ENCODE measurements at regions of chr14 and their contacts with region 1.

Region 1: DNA sequence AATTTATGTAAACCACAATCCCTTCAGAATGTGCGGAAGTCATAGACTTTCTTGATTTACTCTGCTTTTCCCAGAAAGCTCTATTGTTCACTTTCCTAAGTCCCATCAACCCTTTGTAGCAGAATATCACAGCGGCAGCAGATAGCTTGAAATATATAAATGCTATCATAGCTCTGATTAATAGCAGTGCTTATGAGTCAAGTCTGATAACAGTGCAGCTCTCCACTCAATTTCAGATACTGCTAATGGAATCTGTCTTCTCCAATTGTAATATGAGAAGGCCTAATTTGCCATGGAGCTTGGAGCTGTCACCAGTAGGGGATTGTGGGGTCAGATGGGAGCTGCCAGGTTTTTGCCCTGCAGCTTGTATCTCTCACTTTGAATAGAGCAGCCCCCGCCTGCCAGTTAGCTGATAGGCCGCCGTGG is 10.9 kb downstream of the TMEM260 start:
- DNase-seq: no peak
- H3K4me3 ChIP-seq: no peak overlapping the region
- H3K27me3 ChIP-seq: no peaks in the 10 kb centered on the region
- CTCF ChIP-seq: no peak

Region 2: DNA sequence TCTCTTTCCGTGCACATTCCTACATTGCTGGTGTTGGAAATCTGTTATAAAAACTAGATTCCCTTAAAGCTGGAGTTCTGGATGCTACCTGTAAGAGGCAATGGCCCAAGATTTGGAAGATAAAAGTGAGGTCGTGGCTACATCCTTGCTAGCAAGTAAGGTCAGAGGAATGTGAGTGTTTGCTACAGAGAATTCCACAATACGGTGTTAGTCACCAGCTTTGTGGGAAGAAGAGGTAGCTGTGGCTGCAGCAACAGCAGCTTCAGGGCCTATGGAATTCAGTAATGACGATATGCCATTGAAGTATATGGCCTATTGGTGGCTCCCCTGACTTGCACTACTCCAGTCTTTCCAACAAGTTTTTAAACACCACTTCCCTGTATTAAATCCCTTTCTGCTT is 238.7 kb before region 1 on chr14:
- CTCF ChIA-PET with region 1: no interaction called
- POLR2A ChIA-PET with region 1: no interaction called
- DNase-seq: peak; percentile 16
- H3K4me3 ChIP-seq: no peak overlapping the region
- H3K27me3 ChIP-seq: no peaks in the 10 kb centered on the region
- CTCF ChIP-seq: no peak

Region 3: GRCh38 chr14:56579345-56580220 is 11.0 kb before region 1 on chr14 and contains the start of gene TMEM260:
- CTCF ChIA-PET with region 1: interaction called, 18 read pairs
- POLR2A ChIA-PET with region 1: no interaction called
- DNase-seq: peak; percentile 28
- H3K4me3 ChIP-seq: peak within 1 kb of the TSS; percentile 87
- H3K27me3 ChIP-seq: peaks cover 3% of the 10 kb centered on the region
- CTCF ChIP-seq: peak; percentile 93
- polyA plus RNA-seq, gene TMEM260: 9.8 and 15.3 TPM in 2 replicates

Measured in BJ (cell line).